WTC11 (cell line): ENCODE measurements at regions of chr6 and their contacts with region 1.

Region 1: GRCh38 chr6:24666641-24667377 is at the starts of genes ACOT13 and TDP2:
- DNase-seq: peak; percentile 96
- ATAC-seq: peak; percentile 96
- H3K4me3 Mint-ChIP-seq: peak within 1 kb of the TSS; percentile 85
- H3K27ac Mint-ChIP-seq: peak within 1 kb of the TSS; percentile 100
- H3K4me1 Mint-ChIP-seq: peaks cover 25% of the 10 kb centered on the region
- H3K27me3 Mint-ChIP-seq: peaks cover 6% of the 10 kb centered on the region; the same call in 1 of the 2 replicates
- CTCF ChIP-seq: 0 out of 2 replicates have a peak, but pooled peaks have one; percentile 16
- total RNA-seq, gene ACOT13: 54.0 to 64.0 TPM (median 62.8 TPM) in 3 replicates
- total RNA-seq, gene TDP2: 43.5 to 49.1 TPM (median 45.8 TPM) in 3 replicates

Region 2: DNA sequence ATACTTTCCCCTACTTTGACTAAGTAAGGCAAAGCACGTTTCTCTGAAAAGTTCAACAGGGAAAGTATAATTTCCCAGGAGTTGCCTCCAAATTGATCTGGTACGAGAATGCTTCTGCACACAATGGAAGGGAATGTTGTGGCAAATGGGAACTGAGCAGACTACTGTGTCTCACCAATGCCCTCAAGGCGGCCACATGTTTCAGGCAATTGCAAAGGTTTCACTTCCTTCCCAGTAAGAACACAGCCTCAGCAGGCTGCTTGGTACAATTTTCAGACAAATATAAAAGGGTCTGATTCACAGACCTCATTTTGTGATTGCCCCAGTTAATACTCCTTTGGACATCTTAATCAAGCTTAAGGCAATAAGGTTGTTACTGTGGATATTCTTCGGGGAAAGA is 92.0 kb before region 1 on chr6:
- CTCF ChIA-PET with region 1: no interaction called
- POLR2A ChIA-PET with region 1: no interaction called
- DNase-seq: no peak
- ATAC-seq: no peak
- H3K4me3 Mint-ChIP-seq: no peak overlapping the region
- H3K27ac Mint-ChIP-seq: no peak overlapping the region
- H3K4me1 Mint-ChIP-seq: peaks cover 4% of the 10 kb centered on the region
- H3K27me3 Mint-ChIP-seq: peaks cover 26% of the 10 kb centered on the region
- CTCF ChIP-seq: no peak

Region 3: DNA sequence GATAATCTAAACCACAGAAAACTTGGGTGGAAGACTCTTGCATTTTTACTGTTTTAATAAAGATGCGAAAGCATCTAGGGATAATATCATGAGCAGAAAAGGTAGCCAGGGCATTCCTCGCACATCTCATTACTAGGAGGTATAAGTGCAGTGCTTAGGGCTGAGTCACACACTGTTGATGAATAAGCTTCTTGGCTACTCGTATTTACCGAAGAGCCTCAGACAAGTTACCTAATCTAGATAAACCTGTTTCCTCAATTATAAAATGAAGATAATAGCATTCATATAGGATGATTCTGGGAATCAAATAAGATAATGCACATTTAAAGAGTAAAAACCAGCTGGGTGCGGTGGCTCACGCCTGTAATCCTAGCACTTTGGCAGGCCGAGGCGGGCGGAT is 20.0 kb before region 1 on chr6:
- CTCF ChIA-PET with region 1: interaction called, 10 read pairs
- POLR2A ChIA-PET with region 1: interaction called, 8 read pairs
- DNase-seq: no peak
- ATAC-seq: no peak; the same call in 1 of the 2 replicates
- H3K4me3 Mint-ChIP-seq: peak overlapping the region; percentile 91
- H3K27ac Mint-ChIP-seq: no peak overlapping the region
- H3K4me1 Mint-ChIP-seq: peaks cover 12% of the 10 kb centered on the region
- H3K27me3 Mint-ChIP-seq: peaks cover 7% of the 10 kb centered on the region
- CTCF ChIP-seq: no peak

Region 4: DNA sequence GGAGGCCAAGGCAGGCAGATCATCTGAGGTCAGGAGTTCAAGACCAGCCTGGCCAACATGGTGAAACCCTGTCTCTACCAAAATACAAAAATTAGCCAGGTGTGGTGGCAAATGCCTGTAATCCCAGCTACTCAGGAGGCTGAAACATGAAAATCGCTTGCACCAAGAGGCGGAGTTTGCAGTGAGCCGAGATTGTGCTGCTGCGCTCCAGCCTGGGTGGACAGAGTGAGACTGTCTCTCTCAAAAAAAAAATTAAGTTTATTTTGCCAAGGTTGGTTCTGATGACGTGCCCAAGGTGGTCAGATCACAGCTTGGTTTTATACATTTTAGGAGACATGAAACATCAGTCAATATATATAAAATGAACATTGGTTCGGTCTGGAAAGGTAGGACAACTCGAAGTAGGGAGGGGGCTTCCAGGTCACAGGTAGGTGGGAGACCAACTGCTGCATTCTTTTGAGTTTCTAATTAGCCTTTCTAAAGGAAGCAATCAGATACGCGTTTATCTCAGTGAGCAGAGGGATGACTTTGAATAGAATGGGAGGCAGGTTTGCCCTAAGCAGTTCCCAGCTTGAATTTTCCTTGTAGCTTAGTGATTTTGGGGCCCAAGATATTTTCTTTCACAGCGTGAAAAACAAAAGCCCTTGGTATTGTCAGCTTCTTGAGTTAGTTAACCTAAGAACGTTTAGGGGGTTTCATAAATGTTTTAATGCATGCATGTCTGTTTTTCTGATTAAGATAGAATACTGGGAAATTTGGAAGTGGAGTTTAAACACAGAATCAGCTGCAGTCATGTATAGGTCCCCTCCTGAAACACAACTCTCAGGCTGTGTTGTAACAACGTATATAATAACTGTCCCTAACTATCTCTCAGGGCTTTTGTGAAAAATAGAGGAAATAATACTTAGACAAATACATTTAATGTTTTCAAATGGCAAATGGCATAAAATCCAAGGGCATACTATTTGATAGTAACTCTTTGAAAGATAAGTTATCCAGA is 16.8 kb after region 1 on chr6:
- CTCF ChIA-PET with region 1: interaction called, 13 read pairs
- POLR2A ChIA-PET with region 1: interaction called, 22 read pairs
- DNase-seq: no peak
- ATAC-seq: peak; percentile 75
- H3K4me3 Mint-ChIP-seq: peak overlapping the region; percentile 60
- H3K27ac Mint-ChIP-seq: peak overlapping the region; percentile 100
- H3K4me1 Mint-ChIP-seq: peaks cover 71% of the 10 kb centered on the region
- H3K27me3 Mint-ChIP-seq: no peaks in the 10 kb centered on the region
- CTCF ChIP-seq: no peak

Region 5: GRCh38 chr6:24738741-24739140 is 71.9 kb after region 1 on chr6:
- CTCF ChIA-PET with region 1: no interaction called
- POLR2A ChIA-PET with region 1: no interaction called
- DNase-seq: no peak
- ATAC-seq: no peak
- H3K4me3 Mint-ChIP-seq: no peak overlapping the region
- H3K27ac Mint-ChIP-seq: no peak overlapping the region
- H3K4me1 Mint-ChIP-seq: no peaks in the 10 kb centered on the region
- H3K27me3 Mint-ChIP-seq: no peaks in the 10 kb centered on the region
- CTCF ChIP-seq: no peak